ENCODE measurements at regions of chr15 and their contacts with region 1.

Region 1: GRCh38 chr15:98177924-98178592 is 217.6 kb downstream of the ARRDC4 start:
- DNase-seq: no peak
- H3K4me3 ChIP-seq: no peak overlapping the region
- H3K27me3 ChIP-seq: peaks cover 6% of the 10 kb centered on the region; the same call in 1 of the 2 replicates
- CTCF ChIP-seq: peak; percentile 91

Region 2: GRCh38 chr15:97892168-97892938 is 285.7 kb before region 1 on chr15:
- CTCF ChIA-PET with region 1: interaction called, 84 read pairs
- POLR2A ChIA-PET with region 1: no interaction called
- DNase-seq: no peak
- H3K4me3 ChIP-seq: no peak overlapping the region
- H3K27me3 ChIP-seq: no peaks in the 10 kb centered on the region
- CTCF ChIP-seq: no peak

Region 3: DNA sequence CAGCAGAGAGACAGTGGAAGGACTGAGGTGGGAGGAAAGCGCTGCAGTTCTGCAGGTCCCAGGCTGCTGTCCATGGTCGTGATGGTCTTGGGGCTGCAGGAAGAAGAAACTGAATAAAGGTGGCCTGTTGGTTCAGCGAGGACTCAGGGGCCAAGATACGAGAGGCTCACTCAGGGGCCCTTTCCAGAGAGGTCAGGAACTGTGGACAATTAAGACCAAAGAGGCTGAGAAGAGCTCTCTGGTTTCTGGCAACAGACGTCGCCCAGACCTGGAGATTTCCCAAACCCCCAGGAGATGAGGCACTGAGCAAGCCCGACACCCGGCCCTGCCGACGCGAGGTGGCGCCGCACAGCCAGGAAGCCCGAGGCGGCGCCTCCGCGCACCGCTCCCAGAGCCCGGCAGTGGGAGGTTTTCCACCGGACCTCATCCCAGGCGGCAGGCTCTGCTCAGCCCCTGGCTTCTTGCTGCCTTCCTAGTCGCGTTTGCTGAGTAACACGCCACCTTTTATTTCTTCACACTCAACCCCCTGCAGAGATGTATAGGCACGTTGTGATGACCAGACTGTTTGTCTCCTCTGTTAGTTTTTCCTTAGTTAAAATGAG is 274.0 kb before region 1 on chr15:
- CTCF ChIA-PET with region 1: interaction called, 113 read pairs
- POLR2A ChIA-PET with region 1: interaction called, 4 read pairs
- DNase-seq: no peak
- H3K4me3 ChIP-seq: no peak overlapping the region
- H3K27me3 ChIP-seq: no peaks in the 10 kb centered on the region
- CTCF ChIP-seq: peak; percentile 82

Region 4: DNA sequence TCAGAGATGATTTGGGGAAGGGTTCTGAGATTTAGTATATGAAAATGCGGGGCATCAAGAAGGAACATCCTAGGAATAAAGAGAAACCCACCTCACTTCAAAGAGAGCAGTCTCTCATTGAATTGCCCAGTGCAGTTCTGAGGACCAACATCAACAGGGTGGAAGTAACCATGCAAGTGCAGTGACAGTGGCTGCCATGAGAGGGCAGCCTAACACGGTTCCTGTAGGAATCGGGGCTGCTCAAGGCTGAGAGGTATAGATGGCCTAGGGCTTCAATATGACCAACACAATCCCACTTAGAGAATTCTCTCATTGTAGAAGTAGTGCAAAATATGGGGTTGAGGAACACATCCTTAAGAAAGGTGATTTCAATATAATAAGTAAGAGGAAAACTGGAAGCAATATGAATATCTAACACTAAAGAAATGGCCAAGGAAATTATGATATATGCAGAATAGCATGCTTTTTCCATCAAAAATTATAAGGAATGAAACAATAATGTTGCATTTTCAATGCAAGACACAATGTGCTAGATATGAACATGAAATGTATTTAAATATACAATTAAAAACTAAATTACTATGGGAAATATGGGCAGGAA is 268.7 kb before region 1 on chr15:
- CTCF ChIA-PET with region 1: interaction called, 113 read pairs
- POLR2A ChIA-PET with region 1: no interaction called
- DNase-seq: no peak
- H3K4me3 ChIP-seq: no peak overlapping the region
- H3K27me3 ChIP-seq: no peaks in the 10 kb centered on the region
- CTCF ChIP-seq: peak; percentile 98

Region 5: GRCh38 chr15:98085003-98085639 is 92.9 kb before region 1 on chr15:
- CTCF ChIA-PET with region 1: interaction called, 30 read pairs
- POLR2A ChIA-PET with region 1: no interaction called
- DNase-seq: no peak
- H3K4me3 ChIP-seq: no peak overlapping the region
- H3K27me3 ChIP-seq: no peaks in the 10 kb centered on the region
- CTCF ChIP-seq: peak; percentile 63

Region 6: GRCh38 chr15:98196371-98196770 is 18.3 kb after region 1 on chr15:
- CTCF ChIA-PET with region 1: interaction called, 14 read pairs
- POLR2A ChIA-PET with region 1: no interaction called
- DNase-seq: no peak
- H3K4me3 ChIP-seq: no peak overlapping the region
- H3K27me3 ChIP-seq: no peaks in the 10 kb centered on the region
- CTCF ChIP-seq: no peak